MCF 10A (cell line): ENCODE measurements at regions of chr6 and their contacts with region 1.

Region 1: GRCh38 chr6:128520436-128521281 is at the start of gene PTPRK:
- DNase-seq: peak; percentile 93
- H3K4me3 Mint-ChIP-seq: peak within 1 kb of the TSS; percentile 97
- H3K27ac Mint-ChIP-seq: peak within 1 kb of the TSS; percentile 97
- H3K4me1 Mint-ChIP-seq: peaks cover 15% of the 10 kb centered on the region
- H3K27me3 Mint-ChIP-seq: no peaks in the 10 kb centered on the region
- CTCF ChIP-seq: peak; percentile 72
- total RNA-seq, gene PTPRK: 50.2 and 55.5 TPM in 2 replicates

Region 2: DNA sequence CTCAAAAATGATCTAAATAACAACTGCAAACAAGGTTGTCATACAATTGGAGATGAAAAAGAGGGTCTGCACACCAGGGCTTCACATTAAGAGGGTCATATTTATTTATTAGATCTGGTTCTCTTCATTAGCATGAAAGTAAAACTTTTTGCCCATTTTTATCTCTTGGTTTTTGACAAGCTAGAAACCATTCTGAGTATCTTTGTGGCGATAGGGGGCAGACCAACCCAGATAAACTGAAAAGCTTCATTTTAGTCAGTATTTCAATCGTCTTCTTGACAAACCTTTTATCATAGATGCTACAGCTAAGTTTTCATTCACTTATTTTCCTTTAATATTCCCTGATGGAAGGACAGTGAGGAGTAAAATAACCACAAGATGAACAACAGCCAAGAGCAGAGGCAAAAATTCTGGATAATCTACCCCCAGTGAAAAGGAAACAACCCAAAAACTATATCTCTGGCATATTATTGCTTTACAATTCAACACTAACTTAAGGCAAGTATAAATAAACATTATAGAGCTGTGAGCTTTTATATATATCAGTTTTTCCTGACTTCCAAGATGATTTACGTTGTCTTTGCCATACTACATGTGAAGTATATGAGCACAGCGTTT is 665.0 kb before region 1 on chr6:
- CTCF ChIA-PET with region 1: interaction called, 15 read pairs
- POLR2A ChIA-PET with region 1: interaction called, 11 read pairs
- intact Hi-C with region 1: loop called (anchors 1 kb)
- DNase-seq: peak; percentile 35
- H3K4me3 Mint-ChIP-seq: no peak overlapping the region
- H3K27ac Mint-ChIP-seq: no peak overlapping the region
- H3K4me1 Mint-ChIP-seq: no peaks in the 10 kb centered on the region
- H3K27me3 Mint-ChIP-seq: no peaks in the 10 kb centered on the region
- CTCF ChIP-seq: peak; percentile 40

Region 3: GRCh38 chr6:128350416-128351254 is 170.0 kb before region 1 on chr6:
- CTCF ChIA-PET with region 1: interaction called, 4 read pairs
- POLR2A ChIA-PET with region 1: interaction called, 3 read pairs
- intact Hi-C with region 1: loop called (anchors 5 kb)
- DNase-seq: peak; percentile 60
- H3K4me3 Mint-ChIP-seq: no peak overlapping the region
- H3K27ac Mint-ChIP-seq: peak overlapping the region; percentile 14
- H3K4me1 Mint-ChIP-seq: peaks cover 13% of the 10 kb centered on the region
- H3K27me3 Mint-ChIP-seq: no peaks in the 10 kb centered on the region
- CTCF ChIP-seq: no peak

Region 4: DNA sequence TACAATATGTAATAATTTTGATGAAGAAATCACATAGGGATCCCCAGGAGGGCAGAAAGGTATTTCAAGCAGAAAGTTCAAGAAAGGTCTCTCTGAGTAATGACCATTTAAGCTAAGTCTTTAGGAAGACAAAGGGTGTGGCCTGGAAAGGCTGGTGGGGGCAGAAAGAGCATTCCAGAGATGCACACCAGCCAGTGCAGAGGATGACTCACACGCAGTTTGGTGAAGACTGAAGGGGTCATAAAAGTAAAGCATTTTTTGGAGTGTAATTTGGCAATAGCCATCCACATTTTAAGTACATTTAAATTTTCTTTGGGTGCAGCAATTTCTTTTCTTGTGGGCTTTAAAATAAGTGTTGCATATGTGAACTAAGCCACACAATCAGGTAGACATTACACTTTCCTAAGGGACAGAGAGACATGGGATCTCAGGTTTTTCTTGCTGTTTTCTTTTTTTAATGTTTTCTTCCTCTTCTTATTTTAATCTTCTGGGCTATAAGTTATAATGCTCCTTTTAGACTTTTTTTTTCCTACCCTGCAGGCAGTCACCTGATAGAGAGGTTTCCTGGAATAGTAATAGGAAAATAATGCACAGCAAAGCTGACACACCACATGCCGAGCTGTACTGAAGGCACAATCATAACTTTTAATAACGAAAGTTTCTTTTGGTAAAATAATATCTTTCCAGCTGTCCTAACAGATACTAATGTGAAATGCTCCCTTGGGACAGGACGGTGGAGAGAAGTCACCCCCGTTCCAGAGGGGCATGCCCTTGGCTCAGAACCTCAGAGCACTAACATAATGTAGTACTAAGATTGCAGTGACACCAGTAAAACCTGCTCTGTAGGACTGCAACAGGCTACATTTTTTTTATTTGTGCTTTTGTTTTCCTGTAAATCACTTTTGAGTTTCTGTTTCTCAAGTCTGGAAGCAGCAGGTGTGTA is 49.3 kb after region 1 on chr6:
- CTCF ChIA-PET with region 1: no interaction called
- POLR2A ChIA-PET with region 1: interaction called, 16 read pairs
- intact Hi-C with region 1: loop called (anchors 2 kb)
- DNase-seq: peak; percentile 93
- H3K4me3 Mint-ChIP-seq: peak overlapping the region; percentile 43
- H3K27ac Mint-ChIP-seq: peak overlapping the region; percentile 66
- H3K4me1 Mint-ChIP-seq: peaks cover 34% of the 10 kb centered on the region
- H3K27me3 Mint-ChIP-seq: no peaks in the 10 kb centered on the region
- CTCF ChIP-seq: no peak

Region 5: GRCh38 chr6:128630182-128630581 is 109.5 kb after region 1 on chr6:
- CTCF ChIA-PET with region 1: interaction called, 4 read pairs
- POLR2A ChIA-PET with region 1: interaction called, 11 read pairs
- intact Hi-C with region 1: no loop called
- DNase-seq: peak; percentile 41
- H3K4me3 Mint-ChIP-seq: no peak overlapping the region
- H3K27ac Mint-ChIP-seq: no peak overlapping the region
- H3K4me1 Mint-ChIP-seq: peaks cover 10% of the 10 kb centered on the region
- H3K27me3 Mint-ChIP-seq: no peaks in the 10 kb centered on the region
- CTCF ChIP-seq: no peak